ENCODE measurements at regions of chr2 and their contacts with region 1.

Region 1: DNA sequence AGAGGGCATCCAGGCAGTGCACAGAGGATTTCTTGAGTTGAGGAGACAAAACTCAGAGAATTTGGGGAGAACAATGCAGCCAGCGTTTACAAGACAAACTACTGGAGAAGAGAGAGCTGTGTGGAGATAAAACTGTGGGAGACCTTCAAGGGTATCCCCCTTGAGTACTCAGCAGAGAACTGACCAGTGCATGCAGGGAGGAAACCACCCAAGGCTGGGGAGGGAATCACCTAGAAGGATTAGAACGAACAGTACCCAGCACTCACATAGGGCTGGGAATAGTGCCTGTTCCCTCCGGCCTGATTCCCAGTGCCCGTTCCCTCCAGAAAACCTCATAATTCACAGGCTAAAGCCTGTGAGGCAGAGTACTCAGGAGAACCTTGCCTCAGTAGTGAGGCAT is 61.9 kb upstream of the YPEL5 start:
- DNase-seq: no peak
- H3K4me3 ChIP-seq: no peak overlapping the region
- H3K27ac ChIP-seq: no peak overlapping the region
- H3K4me1 ChIP-seq: no peaks in the 10 kb centered on the region
- H3K27me3 ChIP-seq: no peaks in the 10 kb centered on the region
- CTCF ChIP-seq: no peak

Region 2: GRCh38 chr2:30115141-30115980 is 30.4 kb after region 1 on chr2:
- intact Hi-C with region 1: loop called (anchors 5 kb)
- DNase-seq: peak; percentile 86
- H3K4me3 ChIP-seq: no peak overlapping the region
- H3K27ac ChIP-seq: no peak overlapping the region
- H3K4me1 ChIP-seq: no peaks in the 10 kb centered on the region
- H3K27me3 ChIP-seq: no peaks in the 10 kb centered on the region
- CTCF ChIP-seq: peak; percentile 83

Measured in colonic mucosa (tissue), 4 donors.